Activated CD4-positive, alpha-beta T cell treated with anti-CD3 and anti-CD28 coated beads for 36 hours (primary cell): ENCODE measurements at regions of chr5 and their contacts with region 1.

Region 1: GRCh38 chr5:40486437-40487275 is 193.1 kb upstream of the PTGER4 start:
- DNase-seq: peak; percentile 82
- ATAC-seq: peak; percentile 75
- H3K4me3 Mint-ChIP-seq: peak overlapping the region; percentile 12
- H3K27ac Mint-ChIP-seq: peak overlapping the region; percentile 91
- H3K4me1 Mint-ChIP-seq: peaks cover 82% of the 10 kb centered on the region
- H3K27me3 Mint-ChIP-seq: no peaks in the 10 kb centered on the region

Region 2: GRCh38 chr5:39948867-39949468 is 537.7 kb before region 1 on chr5:
- CTCF ChIA-PET with region 1: no interaction called
- POLR2A ChIA-PET with region 1: no interaction called
- intact Hi-C with region 1: loop called (anchors 2 to 5 kb)
- DNase-seq: peak; percentile 70
- ATAC-seq: peak; percentile 97
- H3K4me3 Mint-ChIP-seq: no peak overlapping the region
- H3K27ac Mint-ChIP-seq: no peak overlapping the region
- H3K4me1 Mint-ChIP-seq: peaks cover 5% of the 10 kb centered on the region
- H3K27me3 Mint-ChIP-seq: no peaks in the 10 kb centered on the region

Region 3: DNA sequence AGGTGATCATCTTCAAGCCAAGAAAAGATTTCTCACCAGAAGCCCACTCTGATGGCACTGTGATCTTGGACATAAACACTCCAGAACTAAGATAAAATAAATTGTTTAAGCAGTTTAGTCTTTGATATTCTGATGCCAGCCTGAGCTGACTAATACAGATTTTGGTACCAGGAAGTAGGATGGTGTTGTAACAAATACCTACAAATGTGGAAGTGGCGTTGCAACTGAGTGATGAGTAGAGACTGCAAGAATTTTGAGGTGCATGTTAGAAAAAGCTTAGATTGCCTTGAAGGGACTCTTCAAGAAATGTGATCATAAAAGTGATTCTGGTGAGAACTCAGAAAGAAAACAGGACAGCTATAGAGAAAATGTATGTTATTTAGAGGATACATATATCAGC is 469.5 kb before region 1 on chr5:
- CTCF ChIA-PET with region 1: no interaction called
- POLR2A ChIA-PET with region 1: no interaction called
- intact Hi-C with region 1: no loop called
- DNase-seq: no peak
- ATAC-seq: no peak
- H3K4me3 Mint-ChIP-seq: no peak overlapping the region
- H3K27ac Mint-ChIP-seq: no peak overlapping the region
- H3K4me1 Mint-ChIP-seq: no peaks in the 10 kb centered on the region
- H3K27me3 Mint-ChIP-seq: peaks cover 7% of the 10 kb centered on the region

Region 4: GRCh38 chr5:40223884-40224402 is 262.7 kb before region 1 on chr5:
- CTCF ChIA-PET with region 1: interaction called, 3 read pairs
- POLR2A ChIA-PET with region 1: interaction called, 4 read pairs
- intact Hi-C with region 1: loop called (anchors 1 kb)
- DNase-seq: peak; percentile 63
- ATAC-seq: peak; percentile 87
- H3K4me3 Mint-ChIP-seq: peak overlapping the region; percentile 50
- H3K27ac Mint-ChIP-seq: peak overlapping the region; percentile 94
- H3K4me1 Mint-ChIP-seq: peaks cover 64% of the 10 kb centered on the region
- H3K27me3 Mint-ChIP-seq: no peaks in the 10 kb centered on the region

Region 5: GRCh38 chr5:40386289-40386688 is 100.4 kb before region 1 on chr5:
- CTCF ChIA-PET with region 1: interaction called, 4 read pairs
- POLR2A ChIA-PET with region 1: interaction called, 4 read pairs
- intact Hi-C with region 1: loop called (anchors 1 kb)
- DNase-seq: peak; percentile 39
- ATAC-seq: peak; percentile 11
- H3K4me3 Mint-ChIP-seq: no peak overlapping the region
- H3K27ac Mint-ChIP-seq: peak overlapping the region; percentile 92
- H3K4me1 Mint-ChIP-seq: peaks cover 86% of the 10 kb centered on the region
- H3K27me3 Mint-ChIP-seq: no peaks in the 10 kb centered on the region

Region 6: GRCh38 chr5:40410231-40410861 is 76.3 kb before region 1 on chr5:
- CTCF ChIA-PET with region 1: interaction called, 8 read pairs
- POLR2A ChIA-PET with region 1: interaction called, 13 read pairs
- intact Hi-C with region 1: loop called (anchors 1 kb)
- DNase-seq: peak; percentile 80
- ATAC-seq: peak; percentile 82
- H3K4me3 Mint-ChIP-seq: peak overlapping the region; percentile 58
- H3K27ac Mint-ChIP-seq: peak overlapping the region; percentile 94
- H3K4me1 Mint-ChIP-seq: peaks cover 67% of the 10 kb centered on the region
- H3K27me3 Mint-ChIP-seq: no peaks in the 10 kb centered on the region

Region 7: DNA sequence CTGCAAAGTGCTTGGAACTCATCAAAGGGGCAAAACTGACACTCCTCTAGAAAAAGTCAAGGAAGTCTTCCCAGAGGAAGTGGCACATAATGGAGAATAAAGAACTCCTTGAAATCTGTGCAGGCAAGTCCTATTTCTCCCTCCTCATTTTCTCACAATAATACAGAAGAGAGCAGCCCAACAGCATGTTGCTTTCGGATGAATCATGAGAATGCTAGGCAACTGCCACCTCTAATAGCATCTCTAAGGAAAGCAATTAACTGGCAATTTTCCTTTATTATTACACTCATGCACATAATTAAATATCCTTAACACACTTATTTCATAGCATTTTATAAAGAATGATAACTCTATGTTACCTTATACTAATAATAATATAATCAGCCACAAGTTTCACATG is 70.8 kb after region 1 on chr5:
- CTCF ChIA-PET with region 1: no interaction called
- POLR2A ChIA-PET with region 1: no interaction called
- intact Hi-C with region 1: no loop called
- DNase-seq: no peak
- ATAC-seq: no peak
- H3K4me3 Mint-ChIP-seq: no peak overlapping the region
- H3K27ac Mint-ChIP-seq: no peak overlapping the region
- H3K4me1 Mint-ChIP-seq: peaks cover 23% of the 10 kb centered on the region
- H3K27me3 Mint-ChIP-seq: no peaks in the 10 kb centered on the region

Region 8: GRCh38 chr5:40578501-40579451 is 92.1 kb after region 1 on chr5:
- CTCF ChIA-PET with region 1: no interaction called
- POLR2A ChIA-PET with region 1: no interaction called
- intact Hi-C with region 1: loop called (anchors 1 kb)
- DNase-seq: peak; percentile 84
- ATAC-seq: peak; percentile 95
- H3K4me3 Mint-ChIP-seq: peak overlapping the region; percentile 49
- H3K27ac Mint-ChIP-seq: peak overlapping the region; percentile 72
- H3K4me1 Mint-ChIP-seq: peaks cover 44% of the 10 kb centered on the region
- H3K27me3 Mint-ChIP-seq: no peaks in the 10 kb centered on the region

Region 9: GRCh38 chr5:40736103-40736875 is 249.6 kb after region 1 on chr5:
- CTCF ChIA-PET with region 1: no interaction called
- POLR2A ChIA-PET with region 1: no interaction called
- intact Hi-C with region 1: loop called (anchors 5 kb)
- DNase-seq: no peak
- ATAC-seq: peak; percentile 72
- H3K4me3 Mint-ChIP-seq: no peak overlapping the region
- H3K27ac Mint-ChIP-seq: peak overlapping the region; percentile 69
- H3K4me1 Mint-ChIP-seq: peaks cover 22% of the 10 kb centered on the region
- H3K27me3 Mint-ChIP-seq: no peaks in the 10 kb centered on the region